ENCODE measurements at regions of chr11 and their contacts with region 1.

Region 1: GRCh38 chr11:114208377-114208776 is 87.8 kb upstream of the NNMT start:
- DNase-seq: no peak
- ATAC-seq: no peak
- H3K4me3 ChIP-seq: no peak overlapping the region
- H3K27ac ChIP-seq: peak overlapping the region; percentile 50
- H3K4me1 ChIP-seq: peaks cover 71% of the 10 kb centered on the region
- H3K27me3 ChIP-seq: no peaks in the 10 kb centered on the region
- CTCF ChIP-seq: no peak

Region 2: GRCh38 chr11:114243461-114244372 is 35.3 kb after region 1 on chr11:
- intact Hi-C with region 1: loop called in 1 of 2 experiments (anchors 5 kb)
- DNase-seq: peak; percentile 53 to 79
- ATAC-seq: peak; percentile 66 to 71 (median 70)
- H3K4me3 ChIP-seq: no peak overlapping the region
- H3K27ac ChIP-seq: peak overlapping the region; percentile 78
- H3K4me1 ChIP-seq: peaks cover 58% of the 10 kb centered on the region
- H3K27me3 ChIP-seq: no peaks in the 10 kb centered on the region
- CTCF ChIP-seq: no peak

Region 3: DNA sequence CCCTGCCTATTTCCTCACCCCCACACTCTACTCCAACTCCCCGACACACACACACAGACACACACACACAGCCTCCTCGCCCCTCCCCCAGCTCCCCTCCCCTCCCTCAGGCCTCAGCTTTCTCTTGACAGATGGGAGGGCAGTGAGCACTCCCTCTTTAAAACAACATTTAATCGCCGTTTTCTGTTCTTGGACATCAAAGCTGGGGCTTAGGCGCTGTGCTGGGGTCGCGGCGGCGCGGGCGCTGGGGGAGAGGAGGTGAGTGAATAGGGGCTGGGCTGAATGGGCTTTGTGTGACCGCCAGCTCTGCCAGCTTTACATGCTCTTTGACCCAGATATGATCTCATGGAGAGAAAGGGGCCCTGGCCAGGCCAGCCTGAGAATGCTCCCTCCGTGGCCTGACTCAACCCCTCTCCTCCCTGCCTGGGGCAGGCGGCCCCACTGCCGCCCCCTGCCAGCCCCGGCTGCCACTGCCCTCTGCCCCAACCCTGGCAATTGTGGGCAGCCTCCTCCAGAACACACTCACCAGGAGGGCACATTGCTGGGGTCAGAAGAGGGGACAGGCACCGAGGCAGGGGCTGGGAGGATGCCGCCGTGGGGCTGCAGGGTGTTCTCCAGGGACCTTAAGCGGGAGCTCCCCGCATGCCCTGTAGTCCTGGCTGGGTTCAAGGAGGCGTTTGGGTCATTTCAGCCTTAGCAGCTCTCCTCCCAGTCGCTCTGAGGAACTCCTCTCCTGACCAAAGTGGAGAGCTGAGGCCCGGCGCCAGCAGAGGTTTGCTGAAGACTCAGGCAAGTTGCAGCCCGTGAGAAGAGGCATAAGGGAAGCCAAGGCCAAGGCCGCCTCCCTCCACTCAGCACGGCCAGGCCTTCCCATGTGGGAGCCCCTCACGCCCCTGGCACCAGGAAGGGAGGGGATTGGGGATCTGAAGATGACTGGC is 49.5 kb after region 1 on chr11:
- intact Hi-C with region 1: loop called in 1 of 2 experiments (anchors 10 kb)
- DNase-seq: peak; percentile 69 to 87
- ATAC-seq: peak; percentile 48 to 58 (median 52)
- H3K4me3 ChIP-seq: peak overlapping the region; percentile 29
- H3K27ac ChIP-seq: peak overlapping the region; percentile 89
- H3K4me1 ChIP-seq: peaks cover 66% of the 10 kb centered on the region
- H3K27me3 ChIP-seq: no peaks in the 10 kb centered on the region
- CTCF ChIP-seq: peak; percentile 30

Measured in psoas muscle (tissue), 8 donors.